Sigmoid colon (tissue), 7 donors: ENCODE measurements at regions of chr7 and their contacts with region 1.

Region 1: DNA sequence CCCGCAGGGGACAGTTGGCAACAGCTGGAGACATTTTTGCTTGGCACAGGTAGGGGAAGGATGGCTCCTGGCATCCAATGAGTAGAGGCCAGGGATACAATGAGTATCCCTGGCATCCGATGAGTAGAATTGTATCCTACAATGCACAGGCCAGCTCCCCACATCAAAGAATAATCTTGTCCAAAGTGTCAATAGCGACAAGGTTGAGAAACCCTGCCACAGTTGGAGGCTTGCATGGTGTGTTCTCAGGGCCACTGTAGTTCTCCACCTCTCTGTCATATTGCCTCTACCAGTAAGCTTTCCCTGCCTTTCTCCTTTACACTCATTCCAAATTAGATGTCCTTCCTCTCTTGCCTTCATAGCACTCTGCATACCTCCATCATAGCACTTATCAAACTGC is 60.7 kb downstream of the ZNF92 start:
- DNase-seq: no peak
- H3K4me3 ChIP-seq: no peak overlapping the region
- H3K27ac ChIP-seq: no peak overlapping the region
- H3K4me1 ChIP-seq: peaks cover 0 to 5% (median 0%) of the 10 kb centered on the region in 4 donors
- H3K27me3 ChIP-seq: no peaks in the 10 kb centered on the region
- CTCF ChIP-seq: no peak
- EP300 ChIP-seq: no peak
- POLR2A ChIP-seq: no peak

Region 2: DNA sequence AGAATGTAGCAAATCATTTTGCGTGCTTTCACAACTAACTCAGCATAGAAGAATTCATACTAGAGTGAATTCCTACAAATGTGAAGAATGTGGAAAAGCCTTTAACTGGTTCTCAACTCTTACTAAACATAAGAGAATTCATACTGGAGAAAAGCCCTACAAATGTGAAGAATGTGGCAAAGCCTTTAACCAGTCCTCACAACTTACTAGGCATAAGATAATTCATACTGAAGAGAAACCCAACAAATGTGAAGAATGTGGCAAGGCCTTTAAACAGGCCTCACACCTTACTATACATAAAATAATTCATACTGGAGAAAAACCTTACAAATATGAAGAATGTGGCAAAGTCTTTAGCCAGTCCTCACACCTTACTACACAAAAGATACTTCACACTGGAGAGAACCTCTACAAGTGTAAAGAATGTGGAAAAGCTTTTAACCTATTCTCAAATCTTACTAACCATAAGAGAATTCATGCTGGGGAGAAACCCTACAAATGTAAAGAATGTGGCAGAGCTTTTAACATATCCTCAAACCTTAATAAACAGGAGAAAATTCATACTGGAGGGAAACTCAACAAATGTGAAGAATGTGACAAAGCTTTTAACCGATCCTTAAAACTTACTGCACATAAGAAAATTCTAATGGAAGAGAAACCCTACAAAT is 727.5 kb before region 1 on chr7:
- intact Hi-C with region 1: no loop called
- DNase-seq: no peak
- H3K4me3 ChIP-seq: no peak overlapping the region
- H3K27ac ChIP-seq: no peak overlapping the region
- H3K4me1 ChIP-seq: no peaks in the 10 kb centered on the region
- H3K27me3 ChIP-seq: no peaks in the 10 kb centered on the region
- CTCF ChIP-seq: no peak
- EP300 ChIP-seq: no peak
- POLR2A ChIP-seq: no peak

Region 3: DNA sequence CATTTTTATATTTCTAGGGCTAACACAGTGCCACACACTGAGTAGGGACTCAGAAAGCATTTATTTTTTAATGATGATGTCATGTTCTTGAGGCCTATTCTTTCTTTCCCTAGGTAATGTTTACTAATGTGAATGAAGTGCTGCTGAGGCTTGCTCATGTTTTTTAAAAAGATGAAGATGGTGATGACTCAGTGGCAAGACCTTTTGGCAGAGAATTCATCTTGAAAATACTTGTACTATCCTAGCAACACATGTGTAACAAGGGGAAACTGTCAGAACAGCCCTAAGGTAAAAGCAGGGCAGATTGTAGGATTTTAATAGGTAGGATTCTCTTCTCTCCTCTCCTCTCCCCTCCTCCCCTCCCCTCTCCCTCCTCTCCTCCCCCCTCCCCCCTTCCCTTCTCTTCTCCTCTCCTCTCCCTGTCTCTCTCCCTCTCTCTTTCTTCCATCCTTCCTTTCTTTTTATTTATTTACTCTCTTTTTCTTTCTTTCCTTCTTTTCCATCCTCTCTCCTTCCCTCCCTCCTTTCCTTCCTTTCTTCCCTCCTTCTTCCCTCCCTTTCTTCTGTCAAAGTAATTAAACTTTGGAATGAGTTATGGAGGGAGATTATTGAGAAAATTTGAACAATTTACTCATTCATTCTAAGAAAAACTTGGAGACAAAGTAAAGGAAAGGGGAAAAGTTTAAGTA is 14.7 kb after region 1 on chr7:
- intact Hi-C with region 1: loop called (anchors 1 kb)
- DNase-seq: no peak
- H3K4me3 ChIP-seq: no peak overlapping the region
- H3K27ac ChIP-seq: no peak overlapping the region
- H3K4me1 ChIP-seq: peaks cover 0 to 11% (median 0%) of the 10 kb centered on the region in 4 donors
- H3K27me3 ChIP-seq: no peaks in the 10 kb centered on the region
- CTCF ChIP-seq: no peak
- EP300 ChIP-seq: no peak
- POLR2A ChIP-seq: no peak